Activated CD8-positive, alpha-beta T cell treated with anti-CD3 and anti-CD28 coated beads, Interleukin-2, amount 10 ng/mL, durations not matched to agents 7 days and 5 days (primary cell): ENCODE measurements at regions of chr4 and their contacts with region 1.

Region 1: DNA sequence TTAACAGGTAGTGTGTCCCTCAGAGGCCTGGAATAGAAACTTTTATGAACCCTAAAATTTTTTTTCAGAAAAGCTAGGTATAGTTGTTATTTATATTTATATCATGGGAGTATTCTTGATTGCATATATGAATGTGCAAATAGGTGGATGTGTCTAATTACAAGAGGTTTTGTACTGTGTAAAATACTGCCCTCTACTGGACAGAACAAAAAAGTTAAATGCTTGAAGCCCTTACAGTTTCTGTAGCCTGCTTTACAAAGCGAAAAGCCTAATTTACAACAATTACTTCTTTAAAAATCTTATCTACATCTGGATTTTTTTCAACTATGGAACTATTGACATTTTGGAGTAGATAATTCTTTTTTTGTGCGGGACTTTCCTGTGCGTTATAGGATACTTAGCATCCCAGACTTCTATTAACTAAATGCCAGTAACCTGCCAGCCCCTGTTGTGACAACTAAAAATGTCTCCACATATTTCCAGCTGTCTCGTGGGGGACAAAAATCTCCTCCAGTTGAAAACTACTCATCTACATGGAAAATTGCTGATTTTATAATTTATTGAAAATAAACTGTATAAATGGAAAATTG is 35.1 kb downstream of the ENPEP start:
- DNase-seq: no peak
- ATAC-seq: peak; percentile 55
- H3K4me3 Mint-ChIP-seq: no peak overlapping the region
- H3K27ac Mint-ChIP-seq: no peak overlapping the region
- H3K4me1 Mint-ChIP-seq: peaks cover 6% of the 10 kb centered on the region
- H3K27me3 Mint-ChIP-seq: no peaks in the 10 kb centered on the region

Region 2: GRCh38 chr4:109998867-109999584 is 512.0 kb before region 1 on chr4:
- CTCF ChIA-PET with region 1: interaction called, 197 read pairs
- POLR2A ChIA-PET with region 1: no interaction called
- DNase-seq: peak; percentile 59
- ATAC-seq: peak; percentile 72
- H3K4me3 Mint-ChIP-seq: no peak overlapping the region
- H3K27ac Mint-ChIP-seq: no peak overlapping the region
- H3K4me1 Mint-ChIP-seq: peaks cover 18% of the 10 kb centered on the region
- H3K27me3 Mint-ChIP-seq: peaks cover 12% of the 10 kb centered on the region

Region 3: DNA sequence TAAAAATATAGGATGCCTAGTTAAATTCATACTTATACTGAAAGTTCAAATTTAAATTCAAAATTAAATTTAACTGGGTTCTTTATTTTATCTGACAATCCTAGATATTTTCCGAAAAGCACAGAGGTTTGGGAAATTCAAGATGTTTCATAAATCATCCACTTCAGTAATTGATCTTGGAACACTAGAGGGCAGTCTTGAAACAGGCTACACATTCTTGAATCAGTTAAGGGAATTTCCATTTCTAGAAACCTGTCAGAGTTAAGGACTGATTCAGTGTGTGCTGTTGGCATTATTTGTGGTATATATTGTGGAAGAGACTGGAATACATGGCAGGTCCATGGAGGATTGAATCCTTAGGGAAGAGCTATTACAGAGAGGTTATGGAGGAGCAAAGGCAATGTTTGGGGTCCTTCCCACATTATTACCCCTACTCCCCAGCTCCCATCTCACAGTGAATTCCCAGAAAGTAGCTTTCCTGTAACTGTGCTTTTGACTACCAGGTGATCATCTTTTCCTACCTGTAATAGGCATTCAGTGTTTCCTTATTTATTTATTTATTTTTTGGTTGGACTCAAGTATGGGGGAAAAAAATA is 505.5 kb before region 1 on chr4:
- CTCF ChIA-PET with region 1: interaction called, 197 read pairs
- POLR2A ChIA-PET with region 1: no interaction called
- DNase-seq: no peak
- ATAC-seq: peak; percentile 64
- H3K4me3 Mint-ChIP-seq: no peak overlapping the region
- H3K27ac Mint-ChIP-seq: no peak overlapping the region
- H3K4me1 Mint-ChIP-seq: peaks cover 6% of the 10 kb centered on the region
- H3K27me3 Mint-ChIP-seq: peaks cover 17% of the 10 kb centered on the region